Heart right ventricle (tissue), 16 donors: ENCODE measurements at regions of chr20 and their contacts with region 1.

Region 1: DNA sequence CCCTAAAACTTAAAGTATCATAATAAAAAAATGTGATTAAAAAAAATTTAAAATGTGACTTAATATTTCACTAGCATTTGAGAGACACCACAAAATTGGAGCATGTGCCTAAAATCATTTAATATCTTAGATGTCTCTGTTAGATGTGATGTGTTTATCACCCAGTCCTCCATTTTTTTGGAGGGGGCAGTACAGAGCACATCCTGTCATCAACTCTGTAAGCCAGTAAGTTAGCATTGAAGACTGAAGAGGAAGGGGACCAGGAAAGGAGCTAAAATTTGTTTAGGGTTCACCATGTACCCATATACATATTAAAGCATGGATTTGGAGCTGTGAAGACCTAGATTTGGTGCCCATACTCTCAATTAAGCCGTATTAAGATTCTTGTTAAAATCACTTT is 30.7 kb upstream of the ADIG start:
- DNase-seq: no peak
- ATAC-seq: no peak
- H3K4me3 ChIP-seq: no peak overlapping the region
- H3K27ac ChIP-seq: no peak overlapping the region
- H3K4me1 ChIP-seq: no peaks in the 10 kb centered on the region
- H3K27me3 ChIP-seq: no peaks in the 10 kb centered on the region
- CTCF ChIP-seq: no peak

Region 2: DNA sequence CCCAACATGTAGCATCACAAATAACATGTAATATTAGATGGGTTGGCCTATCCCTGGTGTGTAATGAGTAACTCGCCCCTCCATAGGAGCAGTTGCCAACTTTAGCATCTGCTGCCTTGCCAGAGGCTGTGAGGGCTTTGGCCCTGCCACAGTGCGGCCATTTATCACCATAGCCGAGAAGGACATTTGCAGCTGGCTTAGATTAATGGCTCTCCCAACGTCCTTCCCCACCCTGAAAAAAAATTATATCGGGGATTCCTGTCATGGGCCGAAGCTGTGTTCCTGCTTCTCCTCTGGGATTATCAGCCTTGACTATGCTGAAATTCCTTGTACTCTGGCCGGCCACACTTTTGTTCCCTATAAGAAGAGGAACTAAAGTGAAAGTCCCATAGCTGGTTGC is 23.1 kb after region 1 on chr20:
- intact Hi-C with region 1: loop called in 1 of 10 experiments (anchors 2 kb)
- DNase-seq: no peak
- ATAC-seq: peak in 1 of 8 donors; percentile 29
- H3K4me3 ChIP-seq: no peak overlapping the region
- H3K27ac ChIP-seq: no peak overlapping the region
- H3K4me1 ChIP-seq: no peaks in the 10 kb centered on the region
- H3K27me3 ChIP-seq: no peaks in the 10 kb centered on the region
- CTCF ChIP-seq: no peak